ENCODE measurements at regions of chr12 and their contacts with region 1.

Region 1: DNA sequence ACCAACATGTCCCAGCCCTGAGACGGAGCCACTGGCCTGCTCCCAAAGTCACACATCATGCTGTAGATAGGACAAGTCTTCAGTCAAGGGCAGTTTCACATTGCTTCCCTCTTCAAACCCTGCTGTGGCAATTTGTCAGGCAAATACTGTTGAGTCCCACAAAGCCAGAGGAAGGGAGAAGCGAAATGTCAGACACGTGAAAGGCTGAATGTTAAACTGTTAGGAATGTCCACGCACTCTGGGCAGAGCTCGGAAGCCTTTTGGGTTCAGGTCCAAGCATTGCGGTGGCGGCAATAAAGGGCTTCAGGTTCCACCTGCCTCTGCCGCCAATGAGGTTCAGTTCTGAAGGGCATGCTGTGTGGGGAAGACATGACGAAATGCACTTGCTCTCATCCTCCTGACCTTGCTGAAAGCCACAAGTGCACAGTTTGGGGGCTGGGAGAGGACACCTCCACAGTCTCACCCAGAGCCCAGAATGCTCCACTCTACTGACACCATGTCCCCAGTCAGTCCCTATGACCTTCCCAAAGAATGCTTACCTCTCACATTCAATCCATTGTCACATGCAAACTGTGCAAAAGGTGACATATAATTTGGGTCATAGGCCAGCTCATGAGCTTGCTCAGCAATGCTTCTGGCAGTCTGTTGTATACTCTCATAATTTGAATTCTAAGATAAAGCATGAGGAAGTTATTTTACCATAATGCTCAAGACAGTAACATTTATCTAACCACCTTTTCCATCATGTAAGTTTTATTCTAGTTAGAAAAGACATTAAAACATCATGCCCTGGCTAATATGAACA is 35.7 kb downstream of the RAD9B start:
- DNase-seq: peak; percentile 97
- H3K4me3 Mint-ChIP-seq: peak overlapping the region; percentile 47
- H3K27ac Mint-ChIP-seq: peak overlapping the region; percentile 69
- H3K4me1 Mint-ChIP-seq: peaks cover 40% of the 10 kb centered on the region
- H3K27me3 Mint-ChIP-seq: no peaks in the 10 kb centered on the region
- CTCF ChIP-seq: no peak

Region 2: GRCh38 chr12:110563702-110564640 is 26.2 kb after region 1 on chr12:
- CTCF ChIA-PET with region 1: no interaction called
- POLR2A ChIA-PET with region 1: interaction called, 20 read pairs
- intact Hi-C with region 1: no loop called
- DNase-seq: no peak
- H3K4me3 Mint-ChIP-seq: peak overlapping the region; percentile 41
- H3K27ac Mint-ChIP-seq: peak overlapping the region; percentile 80
- H3K4me1 Mint-ChIP-seq: peaks cover 37% of the 10 kb centered on the region
- H3K27me3 Mint-ChIP-seq: no peaks in the 10 kb centered on the region
- CTCF ChIP-seq: no peak

Region 3: DNA sequence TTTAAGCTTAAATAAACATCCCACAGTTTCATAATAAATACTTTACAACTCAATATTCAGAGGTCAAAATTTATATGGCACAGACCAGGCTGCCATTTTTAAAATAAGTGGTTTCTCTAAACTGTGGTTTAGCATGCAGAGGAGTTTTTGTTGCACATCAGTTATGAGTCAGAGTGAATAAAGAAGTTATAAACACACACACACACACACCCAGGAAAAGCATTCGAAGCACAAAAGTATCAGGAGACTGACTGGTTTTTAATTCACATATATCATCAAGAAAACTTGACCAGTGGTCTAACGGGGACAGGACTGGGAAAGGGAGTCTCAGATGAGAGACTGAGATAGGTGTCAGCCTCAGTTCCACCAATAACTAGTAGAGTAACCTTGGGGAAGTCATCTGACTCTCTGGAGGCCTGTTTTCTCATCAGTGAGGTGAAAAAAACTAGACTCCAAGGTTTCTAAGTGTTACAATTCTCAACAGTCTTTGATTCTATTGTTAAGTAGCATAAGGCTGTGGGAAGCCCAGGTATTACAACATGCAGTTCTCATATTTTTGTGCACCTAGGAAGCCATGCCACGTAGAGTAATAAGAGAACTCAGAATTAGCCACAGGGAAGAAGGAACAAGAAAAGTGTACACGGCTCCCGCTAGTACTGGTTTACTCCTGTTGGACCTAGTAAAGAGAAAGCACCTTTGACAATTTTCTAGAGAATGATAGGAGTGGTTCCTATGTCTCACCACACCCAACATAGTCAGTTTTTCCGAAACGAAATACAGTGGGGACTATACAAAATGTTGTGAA is 40.1 kb after region 1 on chr12:
- CTCF ChIA-PET with region 1: interaction called, 9 read pairs
- POLR2A ChIA-PET with region 1: interaction called, 336 read pairs
- intact Hi-C with region 1: loop called (anchors 5 kb)
- DNase-seq: peak; percentile 93
- H3K4me3 Mint-ChIP-seq: peak overlapping the region; percentile 96
- H3K27ac Mint-ChIP-seq: peak overlapping the region; percentile 97
- H3K4me1 Mint-ChIP-seq: peaks cover 26% of the 10 kb centered on the region
- H3K27me3 Mint-ChIP-seq: no peaks in the 10 kb centered on the region
- CTCF ChIP-seq: no peak

Region 4: GRCh38 chr12:110880648-110881047 is 342.8 kb after region 1 on chr12:
- CTCF ChIA-PET with region 1: no interaction called
- POLR2A ChIA-PET with region 1: no interaction called
- intact Hi-C with region 1: no loop called
- DNase-seq: no peak
- H3K4me3 Mint-ChIP-seq: no peak overlapping the region
- H3K27ac Mint-ChIP-seq: no peak overlapping the region
- H3K4me1 Mint-ChIP-seq: peaks cover 8% of the 10 kb centered on the region
- H3K27me3 Mint-ChIP-seq: no peaks in the 10 kb centered on the region
- CTCF ChIP-seq: no peak

Region 5: DNA sequence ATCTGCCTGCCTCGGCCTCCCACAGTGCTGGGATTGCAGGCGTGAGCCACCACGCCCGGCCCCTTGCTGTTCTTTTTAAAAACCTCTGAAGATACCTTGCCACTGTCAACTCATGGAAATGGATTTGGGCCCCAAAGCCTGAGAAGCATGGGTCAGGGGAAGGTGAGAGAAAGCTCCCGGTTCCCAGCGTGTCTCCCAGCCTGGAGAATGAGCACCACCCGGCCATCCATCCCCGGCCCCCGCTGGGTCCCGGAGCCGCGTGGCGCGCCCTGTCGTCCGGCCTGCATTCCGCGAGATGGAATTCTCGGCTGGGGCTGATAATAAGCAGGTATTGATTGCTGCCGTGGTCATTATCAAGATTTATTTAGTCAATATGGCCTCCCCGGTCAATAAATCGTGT is 509.1 kb after region 1 on chr12:
- CTCF ChIA-PET with region 1: no interaction called
- POLR2A ChIA-PET with region 1: no interaction called
- intact Hi-C with region 1: no loop called
- DNase-seq: no peak
- H3K4me3 Mint-ChIP-seq: no peak overlapping the region
- H3K27ac Mint-ChIP-seq: no peak overlapping the region
- H3K4me1 Mint-ChIP-seq: no peaks in the 10 kb centered on the region
- H3K27me3 Mint-ChIP-seq: no peaks in the 10 kb centered on the region
- CTCF ChIP-seq: no peak